ENCODE measurements at regions of chrX and their contacts with region 1.

Region 1: DNA sequence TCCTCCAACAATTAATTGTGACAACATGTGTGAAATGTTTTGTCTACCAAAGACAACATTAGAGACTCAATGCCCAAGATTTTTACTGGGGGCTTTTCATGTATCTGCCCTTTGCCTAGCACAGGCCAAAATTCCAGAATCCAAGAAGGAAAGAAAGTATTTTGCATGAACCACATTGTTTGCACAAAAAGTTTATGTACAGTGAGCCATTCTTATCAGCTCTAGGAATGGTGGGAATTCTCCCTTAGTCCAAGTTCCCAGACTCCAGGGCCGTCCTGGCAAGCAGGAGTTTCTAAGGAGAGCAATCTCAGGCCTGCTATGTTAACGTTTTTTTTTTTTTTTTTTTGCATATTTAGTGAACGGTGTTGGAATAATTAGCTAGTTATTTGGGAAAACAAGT is 21.6 kb downstream of the GPRASP1 start:
- DNase-seq: no peak
- ATAC-seq: no peak
- H3K4me3 ChIP-seq: no peak overlapping the region
- H3K27ac ChIP-seq: no peak overlapping the region
- H3K4me1 ChIP-seq: no peaks in the 10 kb centered on the region
- H3K27me3 ChIP-seq: no peaks in the 10 kb centered on the region
- CTCF ChIP-seq: no peak
- POLR2A ChIP-seq: no peak
- RAD21 ChIP-seq: no peak

Region 2: GRCh38 chrX:102697494-102697893 is 24.6 kb after region 1 on chrX:
- CTCF ChIA-PET with region 1: no interaction called
- POLR2A ChIA-PET with region 1: no interaction called
- RAD21 ChIA-PET with region 1: no interaction called
- intact Hi-C with region 1: loop called (anchors 2 kb)
- DNase-seq: no peak
- ATAC-seq: no peak
- H3K4me3 ChIP-seq: no peak overlapping the region
- H3K27ac ChIP-seq: no peak overlapping the region
- H3K4me1 ChIP-seq: no peaks in the 10 kb centered on the region
- H3K27me3 ChIP-seq: no peaks in the 10 kb centered on the region
- CTCF ChIP-seq: no peak
- POLR2A ChIP-seq: no peak
- RAD21 ChIP-seq: no peak

Region 3: DNA sequence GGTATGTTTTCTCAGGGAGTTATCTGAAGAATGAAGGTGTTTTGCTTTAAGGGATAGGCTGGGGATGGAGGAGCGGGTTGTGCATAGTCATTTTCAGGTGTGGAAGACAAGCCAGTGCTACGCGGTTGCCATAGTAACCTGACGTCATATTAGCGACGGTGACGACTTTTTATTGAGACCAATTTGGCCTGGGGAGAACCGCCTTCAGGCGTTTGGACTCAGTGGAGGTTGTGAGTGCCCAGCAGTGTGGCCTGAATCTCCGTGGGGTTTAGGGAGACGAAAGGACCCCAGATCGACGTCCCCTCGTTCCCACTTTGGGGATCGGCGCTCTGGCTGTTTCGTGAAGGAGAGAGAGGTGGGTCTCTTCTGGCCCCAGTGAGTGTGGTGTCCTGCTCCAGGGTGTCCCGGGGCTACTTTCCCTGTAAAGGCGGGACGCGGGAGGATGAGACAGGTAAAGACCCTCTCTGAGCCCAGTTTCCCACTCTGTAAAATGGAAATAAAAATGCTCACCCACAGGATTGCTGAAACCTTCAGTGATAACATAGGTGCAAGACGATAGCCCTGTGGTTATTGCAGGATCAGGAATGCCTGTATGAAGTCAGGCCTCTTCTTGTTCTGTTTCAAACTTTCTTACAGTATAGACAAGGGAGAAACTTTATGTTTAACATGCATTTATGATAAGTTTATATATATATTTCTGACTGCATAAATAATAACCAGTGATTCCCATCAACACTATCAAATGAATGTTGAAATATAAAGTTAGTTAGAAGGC is 96.3 kb after region 1 on chrX:
- CTCF ChIA-PET with region 1: no interaction called
- POLR2A ChIA-PET with region 1: no interaction called
- RAD21 ChIA-PET with region 1: no interaction called
- intact Hi-C with region 1: no loop called
- DNase-seq: peak; percentile 89
- ATAC-seq: peak; percentile 91
- H3K4me3 ChIP-seq: peak overlapping the region; percentile 62 to 75
- H3K27ac ChIP-seq: peak overlapping the region; percentile 64; the same call in 1 of the 2 replicates
- H3K4me1 ChIP-seq: peaks cover 0 to 17% of the 10 kb centered on the region in 2 experiments; a peak in 2 of 4 replicates
- H3K27me3 ChIP-seq: no peaks in the 10 kb centered on the region
- CTCF ChIP-seq: no peak
- POLR2A ChIP-seq: no peak
- RAD21 ChIP-seq: no peak